Activated T-helper 2 cell treated with anti-CD3 and anti-CD28 coated beads, Interferon-gamma antibody, Interleukin-2, Interleukin-4, amounts not matched to agents 10 μg/mL and 5 μg/mL and 100 μg/mL, durations not matched to agents 14 hours and 24 hours and 36 hours (primary cell): ENCODE measurements at regions of chr4 and their contacts with region 1.

Region 1: DNA sequence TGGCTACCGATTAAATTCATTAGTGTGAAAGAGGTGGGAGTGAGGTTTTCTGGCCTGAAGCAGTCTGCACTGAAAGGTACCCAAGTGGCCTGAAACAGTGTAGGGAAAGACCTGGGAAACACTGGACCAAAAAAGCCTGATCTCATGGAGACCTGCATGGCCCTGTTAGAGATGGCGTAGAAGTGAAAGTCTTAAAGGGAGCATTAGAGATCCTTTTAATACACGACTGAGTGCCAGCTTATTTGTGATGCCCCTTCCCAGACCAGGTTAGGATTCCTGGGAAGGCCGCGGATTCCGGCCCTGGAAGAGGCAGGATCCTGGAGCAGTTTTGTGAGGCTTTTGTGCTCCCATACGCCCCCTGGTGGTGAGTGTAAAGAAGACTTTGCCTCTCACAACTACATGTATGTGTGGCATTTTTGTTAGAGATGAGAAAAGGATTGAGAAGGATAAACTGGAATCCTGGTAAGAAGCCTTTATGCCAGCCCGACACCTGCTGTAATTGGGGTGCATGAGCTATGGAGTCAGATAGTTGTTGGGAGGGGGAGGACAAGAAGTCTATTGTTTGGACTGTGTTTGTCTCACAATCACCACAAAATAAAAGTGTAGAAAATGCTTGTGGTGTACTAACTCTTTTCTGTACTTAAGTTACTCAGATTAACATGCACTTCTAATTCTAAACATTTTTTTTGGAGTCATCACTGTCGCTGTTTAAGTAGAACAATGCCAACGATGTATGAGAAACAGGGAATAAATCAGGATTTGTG is 54.0 kb downstream of the JADE1 start:
- DNase-seq: peak; percentile 41
- H3K4me3 Mint-ChIP-seq: no peak overlapping the region
- H3K27ac Mint-ChIP-seq: peak overlapping the region; percentile 67
- H3K4me1 Mint-ChIP-seq: peaks cover 46% of the 10 kb centered on the region
- H3K27me3 Mint-ChIP-seq: no peaks in the 10 kb centered on the region

Region 2: GRCh38 chr4:128191115-128191781 is 672.2 kb before region 1 on chr4:
- intact Hi-C with region 1: loop called (anchors 1 kb)
- DNase-seq: peak; percentile 40
- H3K4me3 Mint-ChIP-seq: no peak overlapping the region
- H3K27ac Mint-ChIP-seq: no peak overlapping the region
- H3K4me1 Mint-ChIP-seq: peaks cover 14% of the 10 kb centered on the region
- H3K27me3 Mint-ChIP-seq: no peaks in the 10 kb centered on the region

Region 3: GRCh38 chr4:128558896-128559679 is 304.4 kb before region 1 on chr4:
- intact Hi-C with region 1: loop called (anchors 10 kb)
- DNase-seq: no peak
- H3K4me3 Mint-ChIP-seq: no peak overlapping the region
- H3K27ac Mint-ChIP-seq: no peak overlapping the region
- H3K4me1 Mint-ChIP-seq: peaks cover 1% of the 10 kb centered on the region
- H3K27me3 Mint-ChIP-seq: no peaks in the 10 kb centered on the region

Region 4: GRCh38 chr4:128782076-128782715 is 81.3 kb before region 1 on chr4:
- intact Hi-C with region 1: loop called (anchors 1 kb)
- DNase-seq: no peak
- H3K4me3 Mint-ChIP-seq: no peak overlapping the region
- H3K27ac Mint-ChIP-seq: no peak overlapping the region
- H3K4me1 Mint-ChIP-seq: no peaks in the 10 kb centered on the region
- H3K27me3 Mint-ChIP-seq: peaks cover 18% of the 10 kb centered on the region

Region 5: GRCh38 chr4:128974136-128974581 is 110.7 kb after region 1 on chr4:
- intact Hi-C with region 1: no loop called
- DNase-seq: no peak
- H3K4me3 Mint-ChIP-seq: no peak overlapping the region
- H3K27ac Mint-ChIP-seq: no peak overlapping the region
- H3K4me1 Mint-ChIP-seq: no peaks in the 10 kb centered on the region
- H3K27me3 Mint-ChIP-seq: no peaks in the 10 kb centered on the region

Region 6: GRCh38 chr4:129093191-129093920 is 229.9 kb after region 1 on chr4 and contains the start of gene SCLT1:
- intact Hi-C with region 1: loop called (anchors 5 kb)
- DNase-seq: peak; percentile 95
- H3K4me3 Mint-ChIP-seq: peak within 1 kb of the TSS; percentile 37
- H3K27ac Mint-ChIP-seq: peak within 1 kb of the TSS; percentile 20
- H3K4me1 Mint-ChIP-seq: peaks cover 45% of the 10 kb centered on the region
- H3K27me3 Mint-ChIP-seq: no peaks in the 10 kb centered on the region
- total RNA-seq, gene SCLT1: 23.7 and 24.1 TPM in 2 replicates

Region 7: GRCh38 chr4:129189630-129190029 is 326.1 kb after region 1 on chr4:
- intact Hi-C with region 1: no loop called
- DNase-seq: no peak
- H3K4me3 Mint-ChIP-seq: no peak overlapping the region
- H3K27ac Mint-ChIP-seq: no peak overlapping the region
- H3K4me1 Mint-ChIP-seq: no peaks in the 10 kb centered on the region
- H3K27me3 Mint-ChIP-seq: peaks cover 4% of the 10 kb centered on the region